AG04449 (cell line): ENCODE measurements at regions of chr12 and their contacts with region 1.

Region 1: DNA sequence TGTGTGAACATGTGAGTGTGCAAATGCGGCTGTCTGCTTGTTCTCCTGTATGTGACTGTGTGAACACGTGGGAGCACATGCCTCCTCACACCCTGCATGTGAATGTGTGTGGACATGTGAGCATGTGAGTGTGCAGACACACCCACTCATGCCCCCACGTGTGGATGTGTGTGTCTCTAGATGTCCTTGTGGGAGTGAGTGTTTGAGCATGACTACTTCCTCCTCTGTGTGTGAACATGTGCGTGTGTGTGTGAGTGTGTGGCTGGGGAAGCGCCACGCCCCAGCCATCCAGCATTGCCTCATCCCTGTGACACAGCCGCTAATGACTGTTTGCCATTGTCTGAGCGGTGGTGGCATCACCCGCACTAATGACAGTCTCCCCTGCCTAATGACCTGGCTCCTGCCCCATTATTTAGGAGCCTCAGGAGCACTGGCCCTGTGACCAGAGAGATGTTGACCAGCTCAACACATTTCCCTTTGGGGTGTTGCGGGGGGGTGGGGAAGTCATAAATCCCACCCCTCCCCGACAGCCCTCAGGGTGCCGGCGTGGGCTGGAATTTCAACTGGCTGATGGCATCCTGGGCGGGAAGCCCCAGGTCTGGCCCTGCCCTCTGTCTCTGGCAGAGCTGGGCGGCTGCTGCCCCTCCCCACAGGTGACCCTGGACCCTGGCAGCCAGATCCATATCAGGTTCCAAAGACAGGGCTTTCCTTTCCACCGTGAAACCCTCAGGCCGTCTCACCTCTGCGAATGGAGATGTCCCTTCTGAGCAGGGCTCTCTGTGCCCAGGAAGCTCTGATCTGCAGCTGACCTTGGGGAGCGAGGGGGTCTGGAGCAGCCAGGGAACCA is 11.5 kb upstream of the KRT80 start:
- DNase-seq: peak; percentile 67
- H3K4me3 ChIP-seq: peak overlapping the region; percentile 13
- CTCF ChIP-seq: no peak

Region 2: DNA sequence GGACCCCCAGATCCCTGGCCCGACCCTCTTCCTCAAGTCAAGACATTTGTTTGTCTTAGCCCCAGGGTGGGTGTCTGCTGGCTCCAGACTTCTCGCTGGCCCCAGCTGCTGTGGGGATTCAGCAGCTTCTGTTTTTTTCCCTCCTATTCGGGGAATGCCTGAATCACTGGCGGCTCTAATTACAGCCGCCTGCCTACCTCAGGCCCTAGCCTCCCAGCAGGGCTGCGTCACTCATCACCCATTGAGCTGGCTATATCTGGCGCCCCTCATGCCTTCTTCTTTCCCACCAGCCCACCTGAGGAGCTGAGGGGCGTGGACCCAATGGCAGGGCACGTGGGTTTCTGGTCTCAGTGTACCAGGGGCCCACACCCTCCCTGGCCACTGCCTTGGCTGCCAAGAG is 21.6 kb before region 1 on chr12:
- CTCF ChIA-PET with region 1: interaction called, 5 read pairs
- POLR2A ChIA-PET with region 1: interaction called, 11 read pairs
- DNase-seq: no peak
- H3K4me3 ChIP-seq: no peak overlapping the region; the same call in 1 of the 2 replicates
- CTCF ChIP-seq: no peak

Region 3: GRCh38 chr12:52192173-52192791 is 11.0 kb before region 1 on chr12:
- CTCF ChIA-PET with region 1: interaction called, 18 read pairs
- POLR2A ChIA-PET with region 1: interaction called, 9 read pairs
- DNase-seq: peak; percentile 98
- H3K4me3 ChIP-seq: no peak overlapping the region
- CTCF ChIP-seq: no peak